H1 (cell line): ENCODE measurements at regions of chr15 and their contacts with region 1.

Region 1: GRCh38 chr15:62437753-62438152 is 272.7 kb upstream of the C2CD4B start:
- DNase-seq: no peak
- H3K4me3 ChIP-seq: no peak overlapping the region
- H3K27ac ChIP-seq: no peak overlapping the region
- H3K4me1 ChIP-seq: no peaks in the 10 kb centered on the region
- H3K27me3 ChIP-seq: no peaks in the 10 kb centered on the region
- CTCF ChIP-seq: no peak
- EP300 ChIP-seq: no peak
- POLR2A ChIP-seq: no peak
- RAD21 ChIP-seq: no peak

Region 2: GRCh38 chr15:62344806-62345539 is 92.8 kb before region 1 on chr15:
- CTCF ChIA-PET with region 1: no interaction called
- POLR2A ChIA-PET with region 1: no interaction called
- DNase-seq: peak; percentile 60 to 75
- H3K4me3 ChIP-seq: peak overlapping the region in 1 of 4 experiments; percentile 41; a peak in 1 of 8 replicates
- H3K27ac ChIP-seq: no peak overlapping the region
- H3K4me1 ChIP-seq: no peaks in the 10 kb centered on the region
- H3K27me3 ChIP-seq: no peaks in the 10 kb centered on the region
- CTCF ChIP-seq: peak; percentile 75 to 93 (median 80)
- EP300 ChIP-seq: no peak
- POLR2A ChIP-seq: no peak
- RAD21 ChIP-seq: peak; percentile 72 to 85

Region 3: GRCh38 chr15:62389885-62390790 is 47.6 kb before region 1 on chr15:
- CTCF ChIA-PET with region 1: interaction called, 10 read pairs
- POLR2A ChIA-PET with region 1: no interaction called
- DNase-seq: peak in 1 of 2 experiments; percentile 84
- H3K4me3 ChIP-seq: peak within 1 kb of the TSS; percentile 56 to 99 (median 94)
- H3K27ac ChIP-seq: peak within 1 kb of the TSS; percentile 67
- H3K4me1 ChIP-seq: peaks cover 0 to 6% (median under 1%) of the 10 kb centered on the region in 4 experiments; a peak in 3 of 7 replicates
- H3K27me3 ChIP-seq: peaks cover 1 to 10% (median 9%) of the 10 kb centered on the region in 4 experiments; a peak in 6 of 7 replicates
- CTCF ChIP-seq: no peak
- EP300 ChIP-seq: peak in 1 of 2 experiments; percentile 10; a peak in 1 of 3 replicates
- POLR2A ChIP-seq: peak; percentile 96 to 97
- RAD21 ChIP-seq: 0 out of 4 replicates have a peak, but pooled peaks of 1 of the 2 experiments have one; percentile 13

Region 4: GRCh38 chr15:62495670-62496614 is 58.2 kb after region 1 on chr15:
- CTCF ChIA-PET with region 1: no interaction called
- POLR2A ChIA-PET with region 1: no interaction called
- DNase-seq: no peak
- H3K4me3 ChIP-seq: no peak overlapping the region
- H3K27ac ChIP-seq: no peak overlapping the region
- H3K4me1 ChIP-seq: no peaks in the 10 kb centered on the region; a peak in 1 of 7 replicates
- H3K27me3 ChIP-seq: no peaks in the 10 kb centered on the region
- CTCF ChIP-seq: no peak
- EP300 ChIP-seq: no peak
- POLR2A ChIP-seq: no peak
- RAD21 ChIP-seq: no peak

Region 5: DNA sequence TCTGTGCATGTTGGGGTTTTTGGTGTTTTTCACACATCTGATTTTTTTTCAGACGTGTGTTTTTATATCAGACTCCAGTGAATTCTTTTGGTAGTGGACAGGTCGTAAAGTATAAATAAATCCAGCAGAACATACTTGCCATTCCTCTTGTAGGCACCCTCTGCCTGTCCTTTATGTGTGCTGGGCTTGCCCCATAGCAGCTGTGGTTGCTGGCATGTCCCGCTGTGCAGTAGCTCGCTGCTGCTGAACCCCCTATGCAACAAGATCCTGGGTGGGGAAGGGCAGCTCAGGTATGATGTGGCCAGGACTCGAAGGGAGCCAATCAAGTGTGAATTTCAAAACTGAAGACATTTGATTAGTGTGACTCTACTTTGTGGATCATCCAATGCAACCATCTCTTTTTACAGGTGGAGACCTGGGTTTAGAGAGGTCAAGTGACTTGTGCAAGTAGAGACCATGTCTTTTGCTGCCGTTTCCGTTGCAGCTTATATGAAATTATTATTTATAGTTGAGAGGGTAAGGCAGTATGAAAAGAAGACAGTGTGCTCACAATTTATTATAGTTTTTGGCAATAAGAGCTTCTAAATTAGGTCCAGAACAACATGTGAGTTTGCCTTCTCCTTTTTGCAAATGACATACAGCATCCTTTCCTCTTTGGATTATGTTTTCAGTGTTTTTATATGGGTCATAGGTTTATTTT is 78.1 kb after region 1 on chr15:
- CTCF ChIA-PET with region 1: no interaction called
- POLR2A ChIA-PET with region 1: no interaction called
- DNase-seq: no peak
- H3K4me3 ChIP-seq: no peak overlapping the region
- H3K27ac ChIP-seq: no peak overlapping the region
- H3K4me1 ChIP-seq: peaks cover 0 to 4% (median under 1%) of the 10 kb centered on the region in 4 experiments; a peak in 2 of 7 replicates
- H3K27me3 ChIP-seq: no peaks in the 10 kb centered on the region
- CTCF ChIP-seq: no peak
- EP300 ChIP-seq: no peak
- POLR2A ChIP-seq: no peak
- RAD21 ChIP-seq: no peak